PC-9 (cell line): ENCODE measurements at regions of chr3 and their contacts with region 1.

Region 1: DNA sequence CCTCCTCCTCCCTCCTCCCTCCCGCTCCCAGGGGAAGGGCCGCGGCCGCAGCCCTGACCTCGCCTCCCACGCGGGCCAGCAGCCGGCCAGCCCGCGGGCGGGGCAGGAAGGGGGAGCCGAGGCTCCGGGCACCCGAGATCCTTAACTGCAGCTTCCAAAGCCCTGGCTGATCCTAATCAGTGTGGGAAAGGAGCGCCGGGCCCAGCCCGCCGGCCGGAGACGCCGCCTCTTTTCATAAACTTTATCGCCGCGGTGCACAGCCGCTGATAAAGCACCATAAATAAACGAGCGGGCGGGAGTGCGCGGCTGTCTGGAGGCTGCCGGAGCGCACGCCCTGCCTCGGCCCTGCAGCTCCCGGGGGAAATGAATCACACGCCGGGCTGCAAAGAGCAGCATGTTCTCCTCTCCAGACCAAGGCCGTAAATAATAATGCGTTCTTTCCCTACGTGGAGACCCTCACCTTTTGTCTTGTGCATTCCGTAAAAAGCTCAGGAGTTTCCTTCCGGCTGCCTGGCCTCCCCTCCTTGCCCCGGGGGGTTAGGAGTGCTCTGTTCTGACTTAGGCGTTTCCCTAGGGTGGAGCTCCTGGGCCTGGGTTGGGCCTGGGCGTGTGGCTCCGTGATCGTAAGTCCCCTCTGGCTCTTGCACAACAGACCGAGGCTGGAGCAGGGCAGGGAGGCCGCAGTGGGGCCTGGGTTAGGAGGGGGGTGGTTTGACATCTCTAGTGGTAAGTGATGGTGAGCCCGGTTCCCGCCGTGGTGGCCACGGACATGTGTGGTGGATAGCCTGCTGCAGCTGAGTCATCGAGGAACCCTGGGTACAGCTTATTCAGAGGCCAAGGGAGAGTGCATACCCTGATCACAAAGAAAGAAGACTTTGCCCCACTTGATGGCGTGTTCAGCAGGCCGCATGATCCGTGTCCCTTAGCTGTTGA is 132.6 kb upstream of the HES1 start:
- DNase-seq: peak; percentile 98
- H3K4me3 ChIP-seq: peak overlapping the region; percentile 35; the same call in 1 of the 2 replicates
- H3K27ac ChIP-seq: peak overlapping the region; percentile 88
- H3K4me1 ChIP-seq: peaks cover 40% of the 10 kb centered on the region
- H3K27me3 ChIP-seq: no peaks in the 10 kb centered on the region
- CTCF ChIP-seq: no peak

Region 2: DNA sequence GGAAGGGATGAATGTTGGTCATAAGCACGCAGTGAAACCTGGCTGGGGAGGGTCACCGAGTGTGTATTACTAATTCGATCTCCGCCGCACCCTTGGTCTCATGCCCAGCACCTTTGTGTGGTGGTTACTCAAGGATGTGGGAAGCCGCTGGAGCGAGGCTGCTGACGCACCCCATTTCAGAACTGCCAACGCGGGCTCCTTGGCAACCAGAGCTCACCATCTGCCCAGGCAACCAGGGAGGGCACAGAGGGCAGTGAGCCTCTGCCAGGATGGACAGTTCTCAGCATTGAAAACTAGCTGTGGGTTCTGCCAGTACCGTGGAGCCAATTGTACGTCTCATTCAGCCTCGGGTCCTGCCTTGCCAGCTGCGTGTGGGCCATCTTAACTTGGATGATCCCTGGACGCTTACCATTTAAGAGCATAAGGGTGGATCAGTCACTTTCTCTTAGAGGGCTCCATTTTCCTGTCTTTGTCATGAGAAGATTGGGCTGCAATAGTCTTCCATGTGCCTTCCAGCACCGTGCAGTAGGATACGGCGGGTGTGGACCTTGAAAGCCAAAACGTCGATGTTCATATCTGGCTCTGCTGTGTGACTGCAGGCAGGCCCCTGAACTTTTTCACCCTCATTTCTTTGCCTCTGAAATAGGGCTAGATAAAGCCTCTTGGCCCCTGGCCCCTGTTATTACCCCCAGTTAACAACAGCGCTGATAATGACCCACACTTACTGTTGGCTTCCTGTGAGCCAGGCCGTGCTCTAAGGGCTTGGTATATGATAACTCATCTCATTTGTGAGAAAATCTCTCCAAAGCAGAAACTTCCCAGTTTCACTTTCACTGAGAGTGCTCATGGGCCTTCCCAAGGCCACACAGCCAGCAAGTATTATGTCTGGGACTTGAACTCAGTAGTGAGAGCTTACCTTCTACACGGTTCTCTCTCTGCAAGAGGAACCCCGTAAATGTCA is 171.6 kb before region 1 on chr3:
- CTCF ChIA-PET with region 1: interaction called, 3 read pairs
- POLR2A ChIA-PET with region 1: no interaction called
- intact Hi-C with region 1: loop called (anchors 1 kb)
- DNase-seq: peak; percentile 87 to 97
- H3K4me3 ChIP-seq: no peak overlapping the region
- H3K27ac ChIP-seq: peak overlapping the region; percentile 96
- H3K4me1 ChIP-seq: peaks cover 89% of the 10 kb centered on the region
- H3K27me3 ChIP-seq: no peaks in the 10 kb centered on the region
- CTCF ChIP-seq: no peak

Region 3: DNA sequence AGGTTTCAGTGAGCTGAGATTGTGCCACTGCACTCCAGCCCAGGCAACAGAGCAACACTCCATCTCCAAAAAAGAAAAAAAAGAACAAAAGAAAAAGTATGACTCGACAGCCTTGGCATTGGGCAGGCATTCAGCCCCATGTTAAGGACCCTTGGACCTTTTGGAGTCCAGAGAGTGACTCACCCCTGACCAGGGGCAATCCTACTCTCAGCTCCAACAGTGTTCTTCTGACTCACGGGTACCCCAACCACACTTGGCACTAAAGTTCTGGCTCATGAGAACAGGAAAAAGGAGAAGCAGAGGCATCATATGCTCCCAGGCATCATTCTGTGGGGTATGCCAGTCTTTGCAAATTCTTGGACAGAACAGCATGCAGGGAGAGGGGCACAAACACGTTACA is 119.8 kb before region 1 on chr3:
- CTCF ChIA-PET with region 1: interaction called, 3 read pairs
- POLR2A ChIA-PET with region 1: interaction called, 21 read pairs
- intact Hi-C with region 1: loop called (anchors 1 kb)
- DNase-seq: peak; percentile 58 to 85
- H3K4me3 ChIP-seq: no peak overlapping the region
- H3K27ac ChIP-seq: peak overlapping the region; percentile 81
- H3K4me1 ChIP-seq: peaks cover 88% of the 10 kb centered on the region
- H3K27me3 ChIP-seq: no peaks in the 10 kb centered on the region
- CTCF ChIP-seq: no peak

Region 4: DNA sequence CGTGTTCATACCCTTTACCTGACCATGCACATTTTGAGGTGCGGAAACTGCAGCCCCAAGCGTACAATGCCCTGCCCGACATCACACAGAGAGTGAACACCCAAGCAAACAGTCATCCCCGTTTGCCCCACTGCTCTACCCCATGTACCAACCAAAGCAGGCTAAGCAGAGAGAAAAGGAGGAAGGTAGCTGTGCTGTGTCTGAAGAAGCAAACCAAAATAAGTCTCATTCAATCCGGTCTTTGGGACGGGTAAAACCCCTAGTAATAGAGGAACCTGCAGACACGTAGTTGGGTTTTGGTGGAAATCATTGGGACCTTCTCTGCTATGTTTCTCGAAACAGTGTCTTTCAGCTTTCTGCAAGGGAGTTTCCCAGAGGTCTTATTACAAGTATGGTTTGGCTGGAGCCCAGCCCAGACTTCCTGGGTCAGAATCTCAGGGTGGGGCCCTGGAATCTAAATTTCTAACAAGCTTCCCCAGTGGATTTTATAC is 32.1 kb before region 1 on chr3:
- CTCF ChIA-PET with region 1: no interaction called
- POLR2A ChIA-PET with region 1: interaction called, 7 read pairs
- intact Hi-C with region 1: loop called (anchors 1 kb)
- DNase-seq: peak; percentile 72 to 81
- H3K4me3 ChIP-seq: no peak overlapping the region
- H3K27ac ChIP-seq: no peak overlapping the region
- H3K4me1 ChIP-seq: peaks cover 48% of the 10 kb centered on the region
- H3K27me3 ChIP-seq: no peaks in the 10 kb centered on the region
- CTCF ChIP-seq: no peak

Region 5: DNA sequence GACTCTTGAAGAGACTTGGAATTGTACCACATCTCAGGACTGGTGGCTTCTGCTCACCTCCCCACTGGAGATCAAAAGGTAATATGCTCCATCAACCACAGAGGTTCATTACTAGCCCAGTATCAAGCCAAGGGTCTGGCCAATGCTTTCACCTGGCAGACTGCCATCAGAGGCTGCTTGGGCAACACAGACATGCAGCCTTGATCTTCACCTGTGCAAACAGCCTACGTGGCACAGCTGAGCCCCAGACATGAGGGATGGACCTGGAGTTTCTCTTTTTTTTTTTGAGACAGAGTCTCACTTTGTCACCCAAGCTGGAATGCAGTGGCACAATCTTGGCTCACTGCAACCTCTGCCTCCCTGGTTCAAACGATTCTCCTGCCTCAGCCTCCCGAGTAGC is 27.0 kb after region 1 on chr3:
- CTCF ChIA-PET with region 1: no interaction called
- POLR2A ChIA-PET with region 1: no interaction called
- intact Hi-C with region 1: loop called (anchors 1 kb)
- DNase-seq: peak; percentile 69 to 88
- H3K4me3 ChIP-seq: no peak overlapping the region
- H3K27ac ChIP-seq: peak overlapping the region; percentile 40
- H3K4me1 ChIP-seq: peaks cover 53% of the 10 kb centered on the region
- H3K27me3 ChIP-seq: no peaks in the 10 kb centered on the region
- CTCF ChIP-seq: no peak

Region 6: DNA sequence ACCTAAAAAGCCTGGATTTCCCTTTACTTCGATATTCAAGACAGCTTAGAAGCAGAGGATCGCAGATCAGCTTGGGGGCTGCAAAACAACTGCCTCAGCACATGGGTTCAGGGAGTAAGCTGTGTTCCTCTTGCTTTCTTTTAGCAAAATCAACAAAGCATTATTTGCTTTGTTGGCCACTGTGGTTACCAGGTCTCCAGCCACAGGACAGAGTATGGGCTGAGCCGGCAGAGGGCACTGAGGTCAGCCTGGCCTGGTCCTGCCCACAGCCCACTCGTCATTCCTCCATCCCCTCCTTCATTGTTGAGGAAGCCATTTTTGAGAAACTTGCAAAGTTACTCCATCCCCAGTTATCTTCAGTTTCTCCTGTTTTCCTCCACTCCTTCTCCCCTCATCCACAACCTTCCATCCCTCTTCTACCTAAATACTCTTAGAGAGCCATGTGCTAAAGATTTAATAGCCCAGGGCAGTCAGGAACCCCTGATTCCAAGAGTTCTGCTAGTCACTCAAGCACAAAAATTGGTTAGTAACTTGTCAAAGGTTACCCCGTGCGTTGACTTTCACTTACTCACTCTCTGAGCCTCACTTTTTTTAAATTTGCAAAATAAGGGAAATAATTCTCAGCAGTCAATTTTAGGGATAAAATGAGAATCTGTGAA is 72.5 kb after region 1 on chr3:
- CTCF ChIA-PET with region 1: interaction called, 7 read pairs
- POLR2A ChIA-PET with region 1: interaction called, 10 read pairs
- intact Hi-C with region 1: loop called (anchors 1 kb)
- DNase-seq: peak; percentile 68 to 82
- H3K4me3 ChIP-seq: no peak overlapping the region
- H3K27ac ChIP-seq: peak overlapping the region; percentile 1; the same call in 1 of the 2 replicates
- H3K4me1 ChIP-seq: peaks cover 43% of the 10 kb centered on the region
- H3K27me3 ChIP-seq: no peaks in the 10 kb centered on the region
- CTCF ChIP-seq: no peak; the same call in 1 of the 2 replicates

Region 7: DNA sequence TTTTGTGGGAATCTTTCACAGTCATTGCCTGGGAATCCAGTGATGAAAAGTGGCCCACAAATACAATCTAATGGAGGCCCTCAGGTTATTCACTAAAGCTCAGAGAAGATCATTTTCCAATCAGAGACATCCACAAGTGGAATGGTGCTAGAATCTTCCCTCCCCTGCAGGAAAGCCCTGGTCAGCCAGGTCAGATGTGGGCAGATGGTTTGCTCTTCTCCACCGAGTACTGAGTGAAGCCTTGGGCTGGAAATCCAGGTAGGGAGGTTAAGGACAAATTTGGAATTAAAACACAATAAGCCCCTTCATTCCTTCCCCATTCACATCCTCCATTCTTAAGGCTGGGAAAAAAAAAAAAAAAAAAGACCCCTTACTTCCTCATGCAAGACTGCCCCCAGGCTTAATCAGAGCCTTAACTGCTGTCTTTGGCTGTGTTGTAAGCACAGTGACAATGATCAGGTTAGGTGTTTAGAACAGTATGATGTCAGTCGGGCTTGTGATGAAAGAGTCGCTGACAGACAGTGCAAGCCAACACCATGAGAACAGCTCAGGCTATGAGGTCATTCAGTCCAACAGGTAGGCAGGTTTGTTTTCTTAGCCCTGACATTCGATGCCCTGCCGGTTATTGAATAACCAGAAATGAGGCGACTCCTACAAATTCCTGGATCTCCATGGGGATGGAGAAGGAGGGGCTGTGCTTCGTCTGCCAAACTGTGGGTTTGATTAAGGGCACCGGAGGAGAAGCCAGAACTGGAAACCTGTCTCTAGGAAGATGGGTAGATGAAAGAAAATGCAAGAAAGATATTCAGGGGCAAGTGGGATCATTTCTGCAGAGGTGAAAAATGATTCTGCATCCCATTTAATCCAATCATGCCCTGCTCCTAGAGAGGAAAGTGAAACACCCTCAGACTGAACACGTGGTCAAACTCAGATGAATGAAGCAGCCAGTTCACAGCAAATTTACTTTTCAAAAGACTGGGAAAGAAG is 109.0 kb after region 1 on chr3:
- CTCF ChIA-PET with region 1: no interaction called
- POLR2A ChIA-PET with region 1: no interaction called
- intact Hi-C with region 1: no loop called
- DNase-seq: peak; percentile 85 to 100
- H3K4me3 ChIP-seq: peak overlapping the region; percentile 2; the same call in 1 of the 2 replicates
- H3K27ac ChIP-seq: peak overlapping the region; percentile 38
- H3K4me1 ChIP-seq: peaks cover 18% of the 10 kb centered on the region
- H3K27me3 ChIP-seq: no peaks in the 10 kb centered on the region
- CTCF ChIP-seq: no peak

Region 8: GRCh38 chr3:194315088-194315964 is 311.9 kb after region 1 on chr3:
- CTCF ChIA-PET with region 1: no interaction called
- POLR2A ChIA-PET with region 1: interaction called, 3 read pairs
- intact Hi-C with region 1: loop called (anchors 1 kb)
- DNase-seq: peak; percentile 91 to 97
- H3K4me3 ChIP-seq: peak overlapping the region; percentile 51
- H3K27ac ChIP-seq: peak overlapping the region; percentile 75
- H3K4me1 ChIP-seq: peaks cover 27% of the 10 kb centered on the region
- H3K27me3 ChIP-seq: no peaks in the 10 kb centered on the region
- CTCF ChIP-seq: peak; percentile 99